Sigmoid colon (tissue), 7 donors: ENCODE measurements at regions of chr2 and their contacts with region 1.

Region 1: DNA sequence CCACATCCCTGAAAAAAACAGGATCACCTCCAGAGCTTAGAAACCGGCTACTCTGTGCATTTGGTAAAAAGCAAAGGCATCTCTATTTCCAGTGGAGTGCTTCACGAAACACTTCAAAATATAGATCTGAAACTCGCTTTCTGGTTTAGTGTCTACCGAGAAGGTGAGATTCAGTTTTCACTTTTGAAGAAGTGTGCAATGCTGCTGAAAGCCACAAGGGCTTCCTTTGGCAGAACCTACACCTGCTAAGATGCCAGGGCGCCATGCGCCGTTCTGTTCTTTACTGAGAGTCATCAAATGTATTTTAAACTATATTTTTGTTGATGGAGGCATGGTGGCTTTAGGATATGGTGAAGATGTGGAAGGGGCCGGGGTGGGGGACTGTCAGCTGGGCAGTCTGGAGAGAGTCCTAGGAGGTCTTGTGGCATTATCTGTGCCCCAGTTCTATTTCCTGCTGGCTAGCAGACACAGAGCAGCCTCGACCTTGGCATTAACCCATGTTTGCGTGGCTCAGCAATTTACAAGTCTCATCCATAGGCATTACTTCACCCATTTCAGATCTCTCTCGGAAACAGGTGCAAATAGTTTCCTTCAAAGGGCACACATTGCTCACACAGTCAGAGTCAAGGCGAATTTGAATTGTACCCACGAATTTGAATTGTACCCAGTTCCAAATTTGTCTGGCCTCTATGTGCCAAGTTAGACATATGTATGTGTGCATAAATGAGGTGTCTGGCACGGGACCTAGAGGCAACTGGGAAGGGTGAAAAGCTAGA is 46.7 kb upstream of the KCNF1 start:
- DNase-seq: no peak
- H3K4me3 ChIP-seq: no peak overlapping the region
- H3K27ac ChIP-seq: peak overlapping the region; percentile 38 to 65 (median 62)
- H3K4me1 ChIP-seq: peaks cover 0 to 54% (median 37%) of the 10 kb centered on the region in 4 donors
- H3K27me3 ChIP-seq: no peaks in the 10 kb centered on the region
- CTCF ChIP-seq: peak in 2 of 4 experiments; percentile 31 to 35
- EP300 ChIP-seq: no peak
- POLR2A ChIP-seq: no peak

Region 2: GRCh38 chr2:10844097-10844496 is 21.0 kb before region 1 on chr2:
- intact Hi-C with region 1: loop called (anchors 2 kb)
- DNase-seq: peak; percentile 94
- H3K4me3 ChIP-seq: peak overlapping the region in 3 of 4 donors; percentile 3 to 21 (median 18)
- H3K27ac ChIP-seq: peak overlapping the region; percentile 74 to 89 (median 76)
- H3K4me1 ChIP-seq: peaks cover 0 to 27% (median 12%) of the 10 kb centered on the region in 4 donors
- H3K27me3 ChIP-seq: no peaks in the 10 kb centered on the region
- CTCF ChIP-seq: no peak
- EP300 ChIP-seq: peak in 2 of 4 donors; percentile 20 to 44
- POLR2A ChIP-seq: no peak